ENCODE measurements at regions of chr1 and their contacts with region 1.

Region 1: GRCh38 chr1:155946633-155947219 is 5.3 kb downstream of the RXFP4 start:
- DNase-seq: no peak
- ATAC-seq: peak; percentile 7
- H3K4me3 Mint-ChIP-seq: peak overlapping the region; percentile 46
- H3K27ac Mint-ChIP-seq: peak overlapping the region; percentile 92
- H3K4me1 Mint-ChIP-seq: peaks cover 60% of the 10 kb centered on the region
- H3K27me3 Mint-ChIP-seq: no peaks in the 10 kb centered on the region
- CTCF ChIP-seq: no peak

Region 2: DNA sequence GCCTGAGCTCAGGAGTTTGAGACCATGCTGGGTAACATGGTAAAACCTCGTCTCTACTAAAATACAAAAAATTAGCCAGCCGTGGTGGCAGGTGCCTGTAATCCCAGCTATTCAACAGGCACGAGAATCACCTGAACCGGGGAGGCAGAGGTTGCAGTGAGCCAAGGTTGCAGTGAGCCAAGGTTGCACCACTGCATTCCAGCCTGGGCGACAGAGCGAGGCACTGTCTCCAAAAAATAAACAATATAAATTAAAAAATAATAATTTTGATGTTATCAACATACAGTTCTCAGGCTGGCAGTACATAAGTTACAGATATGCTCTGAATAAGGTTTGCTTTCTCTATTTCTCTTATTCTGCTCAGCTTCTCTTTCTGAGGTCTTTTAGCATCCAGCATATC is 117.3 kb before region 1 on chr1:
- CTCF ChIA-PET with region 1: no interaction called
- POLR2A ChIA-PET with region 1: no interaction called
- intact Hi-C with region 1: no loop called
- DNase-seq: no peak
- ATAC-seq: no peak
- H3K4me3 Mint-ChIP-seq: no peak overlapping the region
- H3K27ac Mint-ChIP-seq: no peak overlapping the region
- H3K4me1 Mint-ChIP-seq: peaks cover 17% of the 10 kb centered on the region
- H3K27me3 Mint-ChIP-seq: no peaks in the 10 kb centered on the region
- CTCF ChIP-seq: no peak

Region 3: DNA sequence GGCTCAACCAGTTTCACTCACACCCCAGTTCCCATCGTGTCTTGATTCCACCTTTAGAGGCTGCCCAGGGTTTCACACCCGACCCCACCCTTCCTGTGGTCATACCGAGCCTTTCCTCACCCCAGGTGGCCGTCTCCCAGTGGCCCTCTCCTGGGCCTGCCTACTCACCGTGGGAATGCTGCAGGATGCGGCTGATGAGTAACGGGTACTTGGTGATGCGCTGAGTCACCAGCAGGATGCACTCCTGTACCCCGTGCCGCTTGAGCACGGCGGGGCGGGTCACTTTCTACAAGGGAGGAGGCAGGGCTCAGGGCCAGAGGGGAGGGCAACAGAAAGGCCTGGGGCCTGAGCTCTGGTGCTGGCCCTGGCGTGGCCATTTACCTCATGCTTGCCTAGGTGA is 15.2 kb after region 1 on chr1:
- CTCF ChIA-PET with region 1: interaction called, 3 read pairs
- POLR2A ChIA-PET with region 1: interaction called, 15 read pairs
- intact Hi-C with region 1: loop called (anchors 1 kb)
- DNase-seq: no peak
- ATAC-seq: peak; percentile 53
- H3K4me3 Mint-ChIP-seq: peak overlapping the region; percentile 41
- H3K27ac Mint-ChIP-seq: peak overlapping the region; percentile 85
- H3K4me1 Mint-ChIP-seq: peaks cover 67% of the 10 kb centered on the region
- H3K27me3 Mint-ChIP-seq: no peaks in the 10 kb centered on the region
- CTCF ChIP-seq: no peak

Region 4: DNA sequence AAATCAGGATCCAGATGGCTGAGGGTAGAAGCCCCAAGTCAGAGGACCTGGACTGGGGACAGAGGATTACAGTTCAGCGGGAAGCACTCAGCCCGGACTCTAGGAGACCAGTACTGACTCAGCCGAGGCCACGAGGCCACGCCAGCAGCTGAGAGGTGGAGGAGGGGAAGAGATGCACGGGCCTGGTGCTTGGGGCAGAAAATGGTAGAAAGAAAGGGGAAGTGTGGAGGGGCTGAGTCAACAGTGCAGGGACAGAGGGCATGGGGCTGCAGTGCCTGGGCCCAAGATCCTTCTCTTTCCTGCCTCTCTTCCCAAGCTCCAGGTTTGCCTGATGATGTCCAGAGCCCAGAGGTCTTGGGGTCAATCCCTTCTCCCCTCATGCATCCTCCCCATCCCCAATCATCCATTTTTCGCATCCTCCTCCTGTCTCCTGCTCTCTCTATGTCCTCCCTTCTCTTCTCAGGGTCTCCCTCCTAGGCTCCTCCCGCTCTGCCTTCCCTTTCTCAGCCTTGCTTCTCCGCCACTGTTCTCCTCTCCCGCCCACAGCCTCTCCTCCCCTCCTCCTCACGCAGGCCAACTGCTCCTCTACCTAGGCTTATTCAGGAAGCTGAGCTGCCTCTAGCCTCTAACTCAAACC is 23.9 kb after region 1 on chr1:
- CTCF ChIA-PET with region 1: interaction called, 4 read pairs
- POLR2A ChIA-PET with region 1: interaction called, 403 read pairs
- intact Hi-C with region 1: no loop called
- DNase-seq: peak; percentile 61
- ATAC-seq: peak; percentile 97
- H3K4me3 Mint-ChIP-seq: peak overlapping the region; percentile 73
- H3K27ac Mint-ChIP-seq: peak overlapping the region; percentile 90
- H3K4me1 Mint-ChIP-seq: peaks cover 98% of the 10 kb centered on the region
- H3K27me3 Mint-ChIP-seq: no peaks in the 10 kb centered on the region
- CTCF ChIP-seq: no peak

Region 5: DNA sequence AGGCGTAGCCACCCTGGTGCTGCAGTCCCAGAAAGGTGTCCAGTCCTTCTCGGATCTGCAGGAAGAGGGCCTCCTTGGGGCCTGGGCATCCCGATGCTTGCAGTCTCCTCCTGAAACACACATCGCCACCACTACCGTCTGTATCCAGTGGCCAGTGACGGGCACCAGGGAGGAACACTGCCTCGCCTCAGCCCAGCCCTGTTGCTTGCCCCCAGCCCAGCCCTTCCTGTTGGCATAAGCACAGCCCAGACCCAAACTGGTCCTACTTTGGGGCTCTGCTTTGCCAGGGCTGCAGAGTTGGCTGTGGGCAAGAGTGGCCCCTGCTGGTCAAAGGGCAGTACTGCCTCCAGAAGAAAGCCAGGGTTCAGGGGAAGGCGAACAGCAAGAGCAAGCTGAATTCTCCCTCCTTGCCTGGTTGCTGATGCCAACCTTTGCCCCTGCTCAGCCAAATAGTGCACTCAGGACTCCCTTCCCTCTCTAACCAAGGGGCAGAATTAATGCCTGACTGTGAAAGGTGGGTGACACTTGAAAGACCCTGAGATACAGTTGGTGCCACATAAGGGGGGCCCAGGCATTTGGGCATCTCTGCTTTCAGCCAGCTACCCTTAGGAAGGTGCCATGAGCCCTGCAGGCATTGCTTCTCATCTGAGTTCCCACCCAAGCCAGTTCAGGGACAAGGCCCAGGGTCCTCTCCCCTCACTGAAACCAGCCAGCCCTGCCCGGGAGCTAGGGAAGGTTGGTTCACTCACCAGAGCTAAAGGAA is 42.7 kb after region 1 on chr1:
- CTCF ChIA-PET with region 1: interaction called, 146 read pairs
- POLR2A ChIA-PET with region 1: interaction called, 403 read pairs
- intact Hi-C with region 1: no loop called
- DNase-seq: peak; percentile 73
- ATAC-seq: peak; percentile 99
- H3K4me3 Mint-ChIP-seq: no peak overlapping the region
- H3K27ac Mint-ChIP-seq: peak overlapping the region; percentile 70
- H3K4me1 Mint-ChIP-seq: peaks cover 22% of the 10 kb centered on the region
- H3K27me3 Mint-ChIP-seq: no peaks in the 10 kb centered on the region
- CTCF ChIP-seq: peak; percentile 43

Region 6: DNA sequence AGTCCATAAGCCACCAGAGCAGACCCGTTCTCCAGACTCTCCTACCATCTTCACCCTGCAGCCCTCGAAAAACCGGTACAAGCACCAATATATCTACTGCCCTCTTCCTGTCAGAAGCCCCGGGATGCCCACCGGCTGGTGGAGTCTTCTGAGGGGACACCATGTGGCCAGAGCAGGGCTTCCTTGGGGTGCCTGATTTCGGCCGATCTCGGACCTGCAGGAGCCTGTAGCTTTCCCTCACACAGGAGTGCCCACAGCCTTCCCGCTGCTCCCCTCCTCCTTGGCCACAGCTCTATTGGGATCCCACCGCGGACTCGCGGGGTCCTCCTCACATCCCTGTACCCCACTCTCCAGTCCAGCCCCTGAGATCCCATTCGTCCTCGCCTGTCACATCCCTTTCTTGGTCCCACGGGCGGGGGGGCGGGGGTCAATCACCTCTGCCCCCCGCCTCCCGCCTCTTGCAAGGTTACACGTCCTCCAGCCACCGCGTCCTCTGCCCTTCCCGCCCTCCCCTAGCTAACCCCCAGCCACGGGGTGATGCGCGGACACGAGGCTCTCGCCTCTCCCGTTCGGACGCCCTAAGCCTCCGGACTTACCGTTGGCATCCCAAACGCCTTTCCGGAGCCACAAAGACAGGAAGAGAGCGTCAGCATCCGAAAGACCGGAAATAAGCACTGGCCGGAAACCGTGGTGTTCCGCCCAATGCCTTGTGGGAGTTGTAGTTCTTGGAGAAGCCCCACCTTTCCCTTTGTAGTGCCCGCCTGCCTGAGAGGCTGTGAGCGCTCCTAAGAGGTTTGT is 73.8 kb after region 1 on chr1 and contains the start of gene SSR2:
- CTCF ChIA-PET with region 1: no interaction called
- POLR2A ChIA-PET with region 1: interaction called, 15 read pairs
- intact Hi-C with region 1: no loop called
- DNase-seq: peak; percentile 65
- ATAC-seq: peak; percentile 99
- H3K4me3 Mint-ChIP-seq: peak within 1 kb of the TSS; percentile 98
- H3K27ac Mint-ChIP-seq: peak within 1 kb of the TSS; percentile 93
- H3K4me1 Mint-ChIP-seq: peaks cover 22% of the 10 kb centered on the region
- H3K27me3 Mint-ChIP-seq: peaks cover 5% of the 10 kb centered on the region
- CTCF ChIP-seq: no peak
- total RNA-seq, gene SSR2: 136 and 146 TPM in 2 replicates

Measured in activated B cell treated with CpG ODN at 0.5 μM for 24 hours (primary cell).